Cardiac septum (tissue), 1 donor: ENCODE measurements at regions of chr6 and their contacts with region 1.

Region 1: DNA sequence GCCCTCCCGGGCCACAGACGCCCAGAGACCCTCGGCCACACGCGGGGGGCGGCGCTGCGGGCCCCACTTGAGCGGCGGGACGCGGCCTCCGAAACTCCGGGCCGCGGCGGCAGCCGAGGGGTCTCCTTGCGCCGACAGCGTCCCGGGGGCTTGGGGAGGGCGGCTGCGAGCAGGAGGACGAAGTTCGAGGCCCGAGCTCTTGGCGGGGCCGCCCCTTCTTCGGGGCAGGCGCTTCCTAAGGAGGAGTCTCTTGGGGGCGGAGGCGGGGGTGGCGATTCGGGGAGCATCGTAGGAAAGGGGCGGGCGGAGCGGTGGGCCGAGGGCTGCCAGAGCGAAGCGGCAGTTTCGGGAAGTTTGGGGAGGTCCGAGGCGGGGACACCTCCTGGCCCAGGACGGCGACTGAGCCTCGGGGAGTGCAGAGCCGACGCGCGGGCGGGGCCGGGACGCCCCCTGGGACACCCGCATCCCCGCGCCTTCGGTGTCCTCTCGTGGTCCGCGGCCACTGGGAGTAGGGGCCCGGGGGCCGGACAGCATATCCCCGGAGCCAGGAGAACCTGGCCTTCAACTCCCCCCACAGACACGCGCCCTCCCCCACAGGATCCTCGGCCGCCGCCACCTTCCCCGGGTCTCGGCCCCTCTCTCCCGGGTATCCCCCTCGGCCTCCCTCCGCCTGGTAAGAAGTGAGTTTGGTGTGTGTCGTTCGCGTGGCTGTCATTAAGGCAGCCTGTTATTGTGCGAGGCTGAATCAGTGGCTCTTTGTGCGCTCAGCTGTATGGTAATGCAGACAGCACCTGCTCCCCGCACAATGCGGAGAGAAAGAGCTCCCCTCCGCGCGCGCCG is 613 bp upstream of the DLL1 start:
- DNase-seq: peak; percentile 80

Region 2: GRCh38 chr6:169831450-169832246 is 459.8 kb before region 1 on chr6:
- intact Hi-C with region 1: loop called (anchors 2 kb)
- DNase-seq: peak; percentile 85

Region 3: GRCh38 chr6:169959136-169960002 is 332.1 kb before region 1 on chr6:
- intact Hi-C with region 1: loop called (anchors 5 kb)
- DNase-seq: no peak

Region 4: GRCh38 chr6:170011204-170012036 is 280.1 kb before region 1 on chr6:
- intact Hi-C with region 1: loop called (anchors 5 kb)
- DNase-seq: peak; percentile 74